ENCODE measurements at regions of chr18 and their contacts with region 1.

Region 1: GRCh38 chr18:11995445-11996189 is 14.3 kb downstream of the IMPA2 start:
- DNase-seq: peak; percentile 71
- H3K4me3 Mint-ChIP-seq: no peak overlapping the region
- H3K27ac Mint-ChIP-seq: no peak overlapping the region
- H3K4me1 Mint-ChIP-seq: peaks cover 8% of the 10 kb centered on the region
- H3K27me3 Mint-ChIP-seq: no peaks in the 10 kb centered on the region

Region 2: DNA sequence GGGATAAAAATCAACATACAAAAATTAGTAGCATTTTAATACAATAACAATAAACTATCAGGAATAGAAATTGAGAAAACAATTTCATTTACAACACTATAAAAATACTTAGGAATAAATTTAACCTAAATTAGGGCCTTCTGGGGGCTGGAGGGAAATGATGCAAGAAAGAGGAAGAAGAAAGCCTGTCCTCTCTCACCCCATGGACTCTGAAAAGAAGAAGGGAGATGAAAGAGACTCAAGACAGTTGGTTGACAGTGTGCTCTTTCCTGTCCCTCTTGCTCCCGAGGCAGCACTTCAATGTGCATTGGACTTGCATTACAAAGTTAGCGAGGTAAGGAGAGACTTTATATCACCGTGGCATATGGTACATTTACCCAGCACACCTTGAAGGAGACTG is 1993.3 kb before region 1 on chr18:
- CTCF ChIA-PET with region 1: no interaction called
- POLR2A ChIA-PET with region 1: no interaction called
- intact Hi-C with region 1: no loop called
- DNase-seq: no peak
- H3K4me3 Mint-ChIP-seq: no peak overlapping the region
- H3K27ac Mint-ChIP-seq: no peak overlapping the region
- H3K4me1 Mint-ChIP-seq: no peaks in the 10 kb centered on the region
- H3K27me3 Mint-ChIP-seq: peaks cover 4% of the 10 kb centered on the region

Region 3: GRCh38 chr18:11654736-11655605 is 340.6 kb before region 1 on chr18:
- CTCF ChIA-PET with region 1: interaction called, 18 read pairs
- POLR2A ChIA-PET with region 1: no interaction called
- intact Hi-C with region 1: no loop called
- DNase-seq: peak; percentile 64
- H3K4me3 Mint-ChIP-seq: no peak overlapping the region
- H3K27ac Mint-ChIP-seq: no peak overlapping the region
- H3K4me1 Mint-ChIP-seq: peaks cover 5% of the 10 kb centered on the region
- H3K27me3 Mint-ChIP-seq: peaks cover 27% of the 10 kb centered on the region

Region 4: GRCh38 chr18:11733031-11733430 is 262.6 kb before region 1 on chr18:
- CTCF ChIA-PET with region 1: interaction called, 20 read pairs
- POLR2A ChIA-PET with region 1: no interaction called
- intact Hi-C with region 1: loop called (anchors 2 kb)
- DNase-seq: peak; percentile 83
- H3K4me3 Mint-ChIP-seq: no peak overlapping the region
- H3K27ac Mint-ChIP-seq: no peak overlapping the region
- H3K4me1 Mint-ChIP-seq: no peaks in the 10 kb centered on the region
- H3K27me3 Mint-ChIP-seq: peaks cover 37% of the 10 kb centered on the region

Region 5: DNA sequence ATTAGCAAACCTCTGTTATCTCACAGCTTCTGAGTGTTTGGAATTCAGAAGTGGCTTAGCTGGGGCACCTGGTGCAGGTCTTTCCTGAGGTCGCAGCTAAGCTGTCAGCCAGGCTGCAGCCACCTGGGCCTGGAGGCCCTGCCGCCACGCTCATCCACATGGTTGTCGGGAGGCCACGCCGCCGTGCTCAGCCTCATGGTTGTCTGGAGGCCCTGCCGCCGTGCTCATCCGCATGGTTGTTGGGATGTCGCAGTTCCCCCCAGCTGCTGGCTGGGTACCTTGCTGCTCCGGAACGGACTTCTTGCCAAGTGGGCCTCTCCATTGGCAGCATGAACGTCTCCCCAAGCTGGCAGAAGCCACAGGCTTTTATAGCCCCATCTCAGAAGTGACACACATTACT is 63.2 kb before region 1 on chr18:
- CTCF ChIA-PET with region 1: interaction called, 281 read pairs
- POLR2A ChIA-PET with region 1: interaction called, 3 read pairs
- intact Hi-C with region 1: no loop called
- DNase-seq: no peak
- H3K4me3 Mint-ChIP-seq: no peak overlapping the region
- H3K27ac Mint-ChIP-seq: no peak overlapping the region
- H3K4me1 Mint-ChIP-seq: no peaks in the 10 kb centered on the region
- H3K27me3 Mint-ChIP-seq: peaks cover 3% of the 10 kb centered on the region

Region 6: GRCh38 chr18:11937874-11938478 is 57.6 kb before region 1 on chr18:
- CTCF ChIA-PET with region 1: interaction called, 281 read pairs
- POLR2A ChIA-PET with region 1: interaction called, 4 read pairs
- intact Hi-C with region 1: loop called (anchors 1 kb)
- DNase-seq: peak; percentile 79
- H3K4me3 Mint-ChIP-seq: no peak overlapping the region
- H3K27ac Mint-ChIP-seq: no peak overlapping the region
- H3K4me1 Mint-ChIP-seq: no peaks in the 10 kb centered on the region
- H3K27me3 Mint-ChIP-seq: no peaks in the 10 kb centered on the region